ENCODE measurements at regions of chr1 and their contacts with region 1.

Region 1: DNA sequence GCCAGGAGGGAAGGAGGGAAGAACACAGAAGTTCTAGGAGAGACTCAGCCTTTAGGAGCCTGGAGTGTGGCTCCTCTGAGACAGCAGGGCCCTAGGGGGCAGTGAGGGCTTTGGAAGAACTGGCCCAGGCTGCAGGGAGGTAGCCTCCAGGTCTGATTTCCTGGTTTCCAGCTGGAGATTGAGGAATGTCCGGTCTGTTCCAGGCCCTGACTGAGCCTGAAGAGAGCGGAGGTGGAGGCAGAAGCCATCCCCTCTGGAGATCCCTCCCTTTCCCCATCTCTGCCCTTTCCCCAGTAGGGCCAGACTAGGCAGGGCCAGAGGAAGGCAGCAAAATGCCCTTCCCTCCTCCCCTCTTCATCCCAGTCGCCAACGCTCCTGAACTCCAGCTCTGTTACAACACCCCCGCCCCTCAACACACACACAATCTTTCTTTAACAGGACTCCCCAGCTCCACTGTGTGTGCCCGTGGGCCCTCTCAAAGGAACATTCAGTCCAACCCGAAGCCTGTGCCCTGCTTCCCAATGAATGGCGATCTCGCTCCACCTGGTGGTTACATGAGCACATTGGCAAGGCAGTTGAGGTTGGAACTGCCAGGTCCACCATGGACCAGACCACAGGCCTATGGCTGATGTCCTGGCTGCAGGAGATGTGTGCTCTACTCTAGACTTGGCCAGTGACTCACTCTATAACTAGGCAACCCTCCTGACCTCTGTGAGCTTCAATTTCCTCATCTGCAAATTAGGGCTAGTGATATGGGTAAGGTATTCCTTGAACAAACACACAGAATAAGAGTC is 32.0 kb downstream of the MAP7D1 start:
- DNase-seq: peak; percentile 50
- H3K4me3 ChIP-seq: no peak overlapping the region
- H3K27me3 ChIP-seq: no peaks in the 10 kb centered on the region
- CTCF ChIP-seq: peak; percentile 87

Region 2: GRCh38 chr1:35988237-35988636 is 199.8 kb before region 1 on chr1:
- CTCF ChIA-PET with region 1: no interaction called
- POLR2A ChIA-PET with region 1: no interaction called
- DNase-seq: no peak
- H3K4me3 ChIP-seq: no peak overlapping the region
- H3K27me3 ChIP-seq: no peaks in the 10 kb centered on the region
- CTCF ChIP-seq: no peak

Region 3: DNA sequence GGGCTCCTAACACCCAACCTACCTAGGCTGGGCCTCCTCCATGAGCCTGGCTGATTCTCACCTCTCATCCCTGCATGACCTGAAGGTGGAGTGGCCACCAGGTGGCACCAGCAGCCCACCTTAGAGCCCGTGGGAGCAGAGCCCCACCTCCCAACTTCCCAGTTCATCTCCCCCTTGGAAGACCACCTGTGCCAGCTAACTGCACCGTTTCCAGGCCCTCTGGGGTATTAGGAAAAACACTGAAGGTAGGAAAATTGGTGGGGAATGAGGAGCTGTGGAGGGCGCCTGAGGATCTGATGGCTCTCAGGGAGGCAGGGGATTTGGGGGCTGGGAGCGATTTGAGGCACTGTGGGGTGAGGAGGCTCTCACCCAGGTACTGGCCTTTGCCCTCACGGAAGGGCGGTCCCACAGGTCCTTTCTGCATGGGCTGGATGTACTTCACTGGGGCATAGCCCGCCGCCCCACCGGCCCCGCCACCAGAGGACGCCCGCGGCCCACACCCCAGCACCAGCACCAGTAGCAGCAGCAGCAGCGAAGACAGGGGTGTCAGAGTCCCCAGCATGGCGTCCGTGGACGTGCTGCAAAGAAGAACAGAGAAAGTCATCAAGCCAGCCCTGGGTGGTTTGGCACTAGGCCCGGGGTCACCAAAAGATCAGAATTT is 88.2 kb before region 1 on chr1:
- CTCF ChIA-PET with region 1: interaction called, 29 read pairs
- POLR2A ChIA-PET with region 1: no interaction called
- DNase-seq: no peak
- H3K4me3 ChIP-seq: no peak overlapping the region
- H3K27me3 ChIP-seq: no peaks in the 10 kb centered on the region
- CTCF ChIP-seq: peak; percentile 79

Region 4: GRCh38 chr1:36155408-36156328 is 32.3 kb before region 1 on chr1 and contains the start of gene MAP7D1:
- CTCF ChIA-PET with region 1: interaction called, 94 read pairs
- POLR2A ChIA-PET with region 1: no interaction called
- DNase-seq: no peak
- H3K4me3 ChIP-seq: peak within 1 kb of the TSS; percentile 94
- H3K27me3 ChIP-seq: no peaks in the 10 kb centered on the region
- CTCF ChIP-seq: no peak
- polyA plus RNA-seq, gene MAP7D1: 20.7 and 33.7 TPM in 2 replicates

Region 5: DNA sequence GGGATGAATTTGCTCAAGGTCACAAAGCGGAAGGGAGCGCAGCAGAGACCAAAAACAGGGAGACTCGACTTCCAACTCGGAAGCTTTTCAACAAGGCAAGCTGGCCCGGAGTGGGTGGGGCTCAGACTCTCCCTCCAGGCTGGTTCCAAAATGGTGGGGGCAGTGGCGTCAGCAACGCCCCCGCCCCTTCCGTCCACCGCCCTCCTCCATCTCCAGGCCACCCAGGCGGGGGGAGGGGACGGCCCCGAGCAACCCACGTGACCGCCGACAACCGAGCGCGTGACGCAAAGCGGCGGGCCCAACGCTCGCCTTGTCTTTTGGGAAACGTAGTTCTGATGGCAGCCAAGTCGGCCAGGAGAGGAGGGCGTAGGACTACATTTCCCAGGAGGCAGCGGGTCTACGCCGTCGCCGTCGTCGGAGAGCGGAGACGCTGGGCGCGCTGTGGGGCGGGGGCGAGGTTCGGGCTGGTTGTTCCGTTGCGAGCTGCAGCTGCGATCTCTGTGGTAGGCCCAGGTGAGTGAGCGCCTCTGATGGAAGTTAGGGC is 36.1 kb after region 1 on chr1 and contains the start of gene THRAP3:
- CTCF ChIA-PET with region 1: interaction called, 18 read pairs
- POLR2A ChIA-PET with region 1: interaction called, 4 read pairs
- DNase-seq: peak; percentile 96
- H3K4me3 ChIP-seq: peak within 1 kb of the TSS; percentile 85
- H3K27me3 ChIP-seq: no peaks in the 10 kb centered on the region
- CTCF ChIP-seq: no peak
- polyA plus RNA-seq, gene THRAP3: 45.8 and 69.0 TPM in 2 replicates

Region 6: GRCh38 chr1:36300526-36300925 is 112.5 kb after region 1 on chr1:
- CTCF ChIA-PET with region 1: interaction called, 11 read pairs
- POLR2A ChIA-PET with region 1: no interaction called
- DNase-seq: no peak
- H3K4me3 ChIP-seq: no peak overlapping the region
- H3K27me3 ChIP-seq: no peaks in the 10 kb centered on the region
- CTCF ChIP-seq: no peak